Activated CD4-positive, alpha-beta T cell treated with anti-CD3 and anti-CD28 coated beads for 36 hours (primary cell): ENCODE measurements at regions of chr12 and their contacts with region 1.

Region 1: DNA sequence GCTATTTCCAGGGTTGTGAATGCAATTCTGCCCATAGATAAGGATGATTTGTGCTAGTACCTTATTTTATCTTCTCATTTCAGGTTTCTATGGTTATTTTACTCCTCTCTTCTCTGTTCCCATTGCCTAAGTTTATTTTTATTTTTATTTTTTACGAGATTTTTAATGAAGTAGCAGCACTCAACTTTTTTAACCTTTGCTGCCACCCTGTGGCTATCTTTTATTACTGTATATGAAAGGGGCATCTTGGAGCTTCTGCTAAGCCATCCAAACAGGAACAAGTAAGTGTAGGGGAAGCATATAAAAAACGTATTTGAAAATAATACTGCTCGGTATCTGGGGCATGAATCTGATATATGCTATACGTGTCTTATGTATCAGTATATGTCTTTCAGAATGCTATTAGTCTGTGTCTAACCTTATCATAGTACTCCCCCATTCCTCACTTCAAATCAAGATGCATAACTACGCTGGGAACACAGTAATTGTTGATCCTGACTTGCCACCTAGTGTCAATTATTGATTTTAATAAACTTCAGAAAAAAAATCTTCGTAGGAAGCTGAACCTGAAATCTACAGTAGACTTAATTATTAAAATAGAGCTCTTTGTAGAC is 60.3 kb downstream of the KLRG1 start:
- DNase-seq: peak; percentile 37
- ATAC-seq: peak; percentile 76
- H3K4me3 Mint-ChIP-seq: no peak overlapping the region
- H3K27ac Mint-ChIP-seq: no peak overlapping the region
- H3K4me1 Mint-ChIP-seq: peaks cover 13% of the 10 kb centered on the region
- H3K27me3 Mint-ChIP-seq: no peaks in the 10 kb centered on the region

Region 2: GRCh38 chr12:8662593-8662992 is 387.0 kb before region 1 on chr12 and contains the start of gene MFAP5:
- CTCF ChIA-PET with region 1: interaction called, 22 read pairs
- POLR2A ChIA-PET with region 1: no interaction called
- intact Hi-C with region 1: loop called (anchors 1 kb)
- DNase-seq: no peak
- ATAC-seq: no peak
- H3K4me3 Mint-ChIP-seq: no peak within 1 kb of the TSS
- H3K27ac Mint-ChIP-seq: no peak within 1 kb of the TSS
- H3K4me1 Mint-ChIP-seq: no peaks in the 10 kb centered on the region
- H3K27me3 Mint-ChIP-seq: peaks cover 4% of the 10 kb centered on the region
- total RNA-seq, gene MFAP5: not detected

Region 3: DNA sequence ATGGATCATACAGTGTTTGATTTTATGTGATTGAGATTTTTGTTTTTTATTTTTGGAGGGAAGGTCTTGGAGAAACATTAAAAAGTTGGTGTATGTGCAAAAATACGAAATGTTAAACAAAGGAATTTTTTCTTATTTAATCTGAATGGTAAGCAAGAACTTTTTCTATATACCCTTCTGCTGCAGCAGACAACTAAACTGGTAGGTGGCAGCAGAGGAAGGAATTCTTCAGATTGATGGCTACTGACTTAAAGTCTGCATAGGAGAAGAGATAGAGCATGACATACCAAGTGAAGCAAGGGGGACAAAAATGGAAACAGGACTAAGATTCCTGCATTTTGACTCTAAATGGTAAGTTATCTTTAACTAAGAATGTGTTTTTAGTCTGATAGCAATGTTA is 269.2 kb before region 1 on chr12:
- CTCF ChIA-PET with region 1: interaction called, 4 read pairs
- POLR2A ChIA-PET with region 1: no interaction called
- intact Hi-C with region 1: loop called in 1 of 2 experiments (anchors 2 kb)
- DNase-seq: no peak
- ATAC-seq: no peak
- H3K4me3 Mint-ChIP-seq: no peak overlapping the region
- H3K27ac Mint-ChIP-seq: no peak overlapping the region
- H3K4me1 Mint-ChIP-seq: no peaks in the 10 kb centered on the region
- H3K27me3 Mint-ChIP-seq: no peaks in the 10 kb centered on the region

Region 4: GRCh38 chr12:8914716-8915526 is 134.7 kb before region 1 on chr12:
- CTCF ChIA-PET with region 1: interaction called, 10 read pairs
- POLR2A ChIA-PET with region 1: no interaction called
- intact Hi-C with region 1: loop called in 1 of 2 experiments (anchors 2 kb)
- DNase-seq: peak; percentile 69
- ATAC-seq: peak; percentile 82
- H3K4me3 Mint-ChIP-seq: no peak overlapping the region
- H3K27ac Mint-ChIP-seq: no peak overlapping the region
- H3K4me1 Mint-ChIP-seq: peaks cover 12% of the 10 kb centered on the region
- H3K27me3 Mint-ChIP-seq: no peaks in the 10 kb centered on the region

Region 5: DNA sequence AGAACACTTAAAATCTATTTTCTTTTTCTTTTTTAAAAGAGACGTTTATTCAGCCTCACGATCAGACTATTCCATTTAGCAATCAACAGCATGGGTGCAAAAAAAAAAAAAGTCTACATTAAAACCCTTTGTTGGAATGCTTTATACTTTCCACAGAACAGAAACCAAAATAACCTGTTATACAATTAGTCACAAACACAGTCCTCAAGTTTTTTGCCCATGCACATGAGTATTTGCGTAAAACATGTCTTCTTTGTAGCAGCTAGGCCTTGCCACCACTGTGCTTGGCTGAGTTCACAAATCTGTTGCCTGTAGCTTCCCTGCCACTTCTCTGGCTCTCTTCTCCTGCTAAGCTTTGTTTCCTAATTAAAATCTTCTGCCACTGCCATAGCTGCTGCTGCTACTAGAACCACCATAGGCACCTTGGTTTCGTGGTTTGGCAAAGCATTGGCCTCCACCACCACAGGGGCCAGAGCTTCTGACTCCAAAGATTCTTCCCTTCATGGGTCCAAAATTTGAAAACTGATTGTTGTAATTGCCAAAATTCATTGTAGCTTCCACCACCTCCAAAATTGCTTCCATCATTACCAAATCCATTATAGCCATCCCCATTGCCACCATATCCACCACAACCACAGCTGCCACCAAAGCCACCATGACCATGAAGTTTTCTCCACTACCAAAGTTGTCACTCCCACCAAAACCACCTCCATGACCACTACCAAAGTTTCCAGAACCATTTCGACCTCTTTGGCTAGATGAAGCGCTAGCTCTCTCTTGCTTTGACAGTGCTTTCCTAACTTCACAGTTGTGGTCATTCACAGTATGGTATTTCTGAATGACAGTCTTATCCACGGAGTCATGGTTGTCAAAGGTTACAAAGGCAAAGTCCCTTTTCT is 22.2 kb before region 1 on chr12:
- CTCF ChIA-PET with region 1: interaction called, 12 read pairs
- POLR2A ChIA-PET with region 1: no interaction called
- intact Hi-C with region 1: no loop called
- DNase-seq: peak; percentile 63
- ATAC-seq: no peak
- H3K4me3 Mint-ChIP-seq: peak overlapping the region; percentile 36
- H3K27ac Mint-ChIP-seq: peak overlapping the region; percentile 79
- H3K4me1 Mint-ChIP-seq: peaks cover 52% of the 10 kb centered on the region
- H3K27me3 Mint-ChIP-seq: no peaks in the 10 kb centered on the region